ENCODE measurements at regions of chrX and their contacts with region 1.

Region 1: DNA sequence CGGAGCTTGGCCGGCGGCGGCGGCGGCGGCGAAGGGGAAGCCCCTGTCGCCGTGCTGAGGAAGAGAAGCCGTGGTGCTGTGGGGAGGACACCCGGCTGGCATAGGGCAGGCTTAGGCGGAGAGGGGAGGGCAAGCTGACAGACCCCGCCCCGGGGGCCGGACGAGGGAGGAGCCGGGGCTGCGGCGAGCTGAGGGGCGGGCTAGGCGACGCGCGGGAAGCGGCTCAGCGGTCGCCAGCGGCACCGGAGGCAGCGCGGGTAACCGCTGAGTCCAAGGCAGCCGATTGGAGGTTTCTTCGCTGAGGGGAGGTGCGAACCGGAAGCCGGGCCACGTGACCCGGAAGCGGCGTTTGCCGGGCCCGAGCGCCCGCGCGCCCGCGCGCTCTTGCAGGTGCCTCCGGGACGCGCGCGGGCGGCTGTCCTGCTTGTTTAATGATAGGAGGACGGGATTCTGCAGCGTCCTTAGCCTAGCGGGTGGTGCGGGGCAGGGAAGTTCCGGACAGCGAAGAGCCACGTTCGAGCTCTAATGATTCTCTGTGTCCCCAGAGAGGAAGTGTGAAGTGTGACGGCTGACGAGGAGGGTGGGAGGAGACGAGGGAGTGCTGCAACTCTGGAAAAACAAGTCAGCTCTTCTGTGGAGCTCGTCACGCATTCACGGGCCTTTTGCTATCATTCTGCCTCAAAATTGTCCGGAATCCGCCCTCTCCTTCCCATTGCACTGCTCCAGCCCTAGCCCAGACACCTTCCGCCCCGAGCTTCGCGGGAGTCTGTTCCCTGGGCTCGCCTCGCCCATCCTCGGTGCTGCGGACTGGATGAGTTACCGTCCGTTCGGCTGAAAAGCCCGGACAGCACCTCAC is at the start of gene AP1S2:
- DNase-seq: peak; percentile 88
- ATAC-seq: peak; percentile 90
- H3K4me3 Mint-ChIP-seq: peak within 1 kb of the TSS; percentile 91
- H3K27ac Mint-ChIP-seq: peak within 1 kb of the TSS; percentile 98
- H3K4me1 Mint-ChIP-seq: peaks cover 31% of the 10 kb centered on the region
- H3K27me3 Mint-ChIP-seq: no peaks in the 10 kb centered on the region
- CTCF ChIP-seq: no peak
- total RNA-seq, gene AP1S2: 42.3 and 45.9 TPM in 2 replicates

Region 2: DNA sequence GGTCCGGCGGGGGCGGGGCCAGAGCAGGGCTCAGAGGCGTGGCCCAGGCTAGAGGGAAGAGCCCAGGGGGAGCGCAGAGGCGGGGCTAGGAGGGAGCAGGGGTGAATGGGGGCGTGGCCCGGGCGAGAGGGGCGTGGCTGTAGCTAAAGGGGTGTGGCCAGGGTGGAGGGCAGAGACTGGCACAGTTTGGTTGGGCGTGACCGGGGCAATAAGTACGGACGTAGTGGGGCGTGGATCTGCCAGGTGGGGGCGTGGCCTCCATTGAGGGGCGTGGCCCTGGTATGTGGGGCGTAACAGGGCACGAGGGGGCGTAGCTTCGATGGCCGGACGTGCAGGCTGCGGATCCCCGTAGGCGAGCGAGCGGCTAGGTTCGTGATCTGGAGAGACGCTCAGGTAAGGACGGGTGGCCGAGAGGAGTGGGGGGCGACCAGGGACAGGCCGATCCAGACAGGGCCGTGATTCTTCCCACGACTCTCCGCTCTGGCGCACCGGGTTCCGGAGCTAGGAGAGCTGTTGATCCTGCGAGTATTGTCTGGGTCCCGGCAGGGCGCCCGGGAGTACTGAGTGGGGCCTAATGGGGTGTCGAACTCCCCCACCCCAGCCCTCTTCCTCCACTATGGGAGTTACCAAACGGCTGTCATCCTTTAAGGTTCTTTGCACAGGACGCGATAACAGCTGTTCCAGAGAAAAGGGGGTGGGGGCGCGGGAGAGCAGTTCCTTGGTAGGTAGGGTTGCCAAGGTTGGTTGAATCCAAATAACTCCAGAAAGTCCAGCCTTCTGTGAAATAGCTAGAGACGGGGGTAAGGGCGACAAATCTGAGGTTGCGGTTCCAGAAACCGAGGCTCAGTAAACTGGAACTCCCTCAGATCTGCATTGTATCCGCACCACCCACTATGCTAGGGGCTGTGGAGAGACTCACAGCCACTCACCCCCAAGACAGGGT is 116.7 kb before region 1 on chrX and contains the start of gene CA5B:
- CTCF ChIA-PET with region 1: interaction called, 4 read pairs
- POLR2A ChIA-PET with region 1: interaction called, 12 read pairs
- intact Hi-C with region 1: loop called (anchors 1 kb)
- DNase-seq: peak; percentile 97
- ATAC-seq: peak; percentile 94
- H3K4me3 Mint-ChIP-seq: peak within 1 kb of the TSS; percentile 88
- H3K27ac Mint-ChIP-seq: peak within 1 kb of the TSS; percentile 80
- H3K4me1 Mint-ChIP-seq: peaks cover 33% of the 10 kb centered on the region
- H3K27me3 Mint-ChIP-seq: no peaks in the 10 kb centered on the region
- CTCF ChIP-seq: no peak
- total RNA-seq, gene CA5B: 9.9 and 10.6 TPM in 2 replicates

Region 3: DNA sequence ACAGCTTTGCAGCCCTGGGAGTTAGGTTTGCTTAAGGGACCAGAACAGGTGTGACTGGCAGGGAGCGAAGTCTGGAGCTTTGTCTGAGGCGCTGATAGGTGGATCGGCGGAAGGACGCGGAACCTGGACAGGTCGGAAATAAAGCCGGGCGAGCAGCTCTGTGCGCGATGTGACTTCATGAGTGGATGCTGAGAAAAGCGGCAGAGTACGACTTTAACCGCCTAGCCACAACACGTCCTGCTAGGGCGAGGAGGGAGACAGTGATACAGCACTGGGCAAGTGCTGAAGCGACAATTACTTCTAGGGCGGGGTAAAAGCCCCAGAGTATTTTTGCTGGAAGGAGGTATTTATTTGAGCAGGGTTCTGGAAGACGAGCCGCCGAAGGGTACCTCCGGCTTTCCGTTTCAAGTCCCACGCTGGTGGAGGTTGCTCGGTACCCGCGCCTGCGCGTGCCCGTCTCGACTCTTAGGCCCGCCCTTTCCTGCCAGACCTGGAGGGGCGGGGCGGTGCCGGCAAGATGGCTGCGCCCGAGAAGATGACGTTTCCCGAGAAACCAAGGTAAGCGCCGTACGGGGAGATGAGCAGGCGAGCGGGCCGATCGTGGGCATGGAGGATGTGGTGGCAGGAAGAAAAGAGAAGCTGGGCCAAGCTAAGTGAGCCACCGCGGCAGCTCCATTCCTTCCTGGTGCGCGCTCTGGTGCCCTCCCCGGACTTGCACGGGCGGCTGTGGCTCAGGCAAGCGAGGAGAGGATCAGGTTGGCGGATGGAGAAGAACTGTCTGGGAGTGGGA is 64.8 kb before region 1 on chrX and contains the start of gene ZRSR2:
- CTCF ChIA-PET with region 1: no interaction called
- POLR2A ChIA-PET with region 1: interaction called, 18 read pairs
- intact Hi-C with region 1: loop called (anchors 1 kb)
- DNase-seq: peak; percentile 76
- ATAC-seq: peak; percentile 93
- H3K4me3 Mint-ChIP-seq: no peak within 1 kb of the TSS
- H3K27ac Mint-ChIP-seq: peak within 1 kb of the TSS; percentile 35
- H3K4me1 Mint-ChIP-seq: peaks cover 18% of the 10 kb centered on the region
- H3K27me3 Mint-ChIP-seq: no peaks in the 10 kb centered on the region
- CTCF ChIP-seq: no peak
- total RNA-seq, gene ZRSR2: 19.8 and 20.9 TPM in 2 replicates

Region 4: DNA sequence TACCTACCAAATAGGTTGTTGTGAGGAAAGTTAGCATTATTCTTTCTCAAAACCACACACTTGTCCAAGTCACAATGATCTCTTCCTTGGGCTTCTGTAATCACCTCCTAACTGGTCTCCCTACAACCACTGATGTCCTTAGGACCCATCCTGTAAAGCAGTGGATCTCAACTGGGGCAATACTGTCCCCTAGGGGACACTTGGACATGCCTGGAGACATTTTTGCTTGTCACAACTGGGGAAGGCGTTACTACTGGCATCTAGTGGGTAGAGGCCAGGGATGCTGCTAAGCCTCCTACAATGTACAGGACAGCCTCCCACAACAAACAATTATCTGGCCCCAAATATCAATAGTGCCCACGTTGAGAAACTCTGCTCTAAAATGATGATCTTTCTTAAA is 118.4 kb after region 1 on chrX:
- CTCF ChIA-PET with region 1: interaction called, 4 read pairs
- POLR2A ChIA-PET with region 1: no interaction called
- intact Hi-C with region 1: loop called (anchors 1 kb)
- DNase-seq: no peak
- ATAC-seq: peak; percentile 76
- H3K4me3 Mint-ChIP-seq: no peak overlapping the region
- H3K27ac Mint-ChIP-seq: no peak overlapping the region
- H3K4me1 Mint-ChIP-seq: peaks cover 24% of the 10 kb centered on the region
- H3K27me3 Mint-ChIP-seq: no peaks in the 10 kb centered on the region
- CTCF ChIP-seq: no peak

Region 5: GRCh38 chrX:16138108-16138427 is 283.1 kb after region 1 on chrX:
- CTCF ChIA-PET with region 1: interaction called, 9 read pairs
- POLR2A ChIA-PET with region 1: no interaction called
- intact Hi-C with region 1: loop called (anchors 1 kb)
- DNase-seq: no peak
- ATAC-seq: peak; percentile 51
- H3K4me3 Mint-ChIP-seq: no peak overlapping the region
- H3K27ac Mint-ChIP-seq: no peak overlapping the region
- H3K4me1 Mint-ChIP-seq: peaks cover 13% of the 10 kb centered on the region
- H3K27me3 Mint-ChIP-seq: no peaks in the 10 kb centered on the region
- CTCF ChIP-seq: no peak

Region 6: GRCh38 chrX:16719334-16720084 is 864.6 kb after region 1 on chrX and contains the start of gene SYAP1:
- CTCF ChIA-PET with region 1: no interaction called
- POLR2A ChIA-PET with region 1: interaction called, 3 read pairs
- intact Hi-C with region 1: loop called (anchors 1 kb)
- DNase-seq: peak; percentile 87
- ATAC-seq: peak; percentile 93
- H3K4me3 Mint-ChIP-seq: peak within 1 kb of the TSS; percentile 90
- H3K27ac Mint-ChIP-seq: peak within 1 kb of the TSS; percentile 94
- H3K4me1 Mint-ChIP-seq: peaks cover 15% of the 10 kb centered on the region
- H3K27me3 Mint-ChIP-seq: no peaks in the 10 kb centered on the region
- CTCF ChIP-seq: no peak
- total RNA-seq, gene SYAP1: 14.9 and 16.8 TPM in 2 replicates

Measured in activated B cell treated with CpG ODN at 0.5 μM for 24 hours (primary cell).